Heart right ventricle (tissue), 16 donors: ENCODE measurements at regions of chr6 and their contacts with region 1.

Region 1: DNA sequence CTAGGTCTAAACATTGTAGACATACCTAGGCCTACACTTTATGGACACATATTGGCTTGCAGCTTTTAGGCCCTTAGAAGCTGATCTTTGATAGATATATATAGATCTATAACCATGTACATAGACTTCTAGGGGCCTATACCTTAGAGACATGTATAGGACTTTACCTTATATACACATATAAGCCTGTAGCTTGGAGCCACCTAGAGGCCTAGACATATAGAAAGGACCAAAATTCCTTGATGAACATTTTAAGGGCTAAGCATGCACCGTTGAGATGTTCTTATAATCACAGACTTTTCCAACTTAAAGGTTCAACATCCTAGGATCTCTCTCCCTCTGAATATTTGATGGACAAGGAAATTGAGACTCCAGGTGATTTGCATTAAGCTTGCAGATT is 371.7 kb upstream of the SASH1 start:
- DNase-seq: no peak
- ATAC-seq: no peak
- H3K4me3 ChIP-seq: no peak overlapping the region
- H3K27ac ChIP-seq: no peak overlapping the region
- H3K4me1 ChIP-seq: no peaks in the 10 kb centered on the region
- H3K27me3 ChIP-seq: no peaks in the 10 kb centered on the region
- CTCF ChIP-seq: no peak

Region 2: GRCh38 chr6:147559006-147559405 is 412.0 kb before region 1 on chr6:
- intact Hi-C with region 1: loop called in 1 of 10 experiments (anchors 5 kb)
- DNase-seq: no peak
- ATAC-seq: no peak
- H3K4me3 ChIP-seq: no peak overlapping the region
- H3K27ac ChIP-seq: no peak overlapping the region
- H3K4me1 ChIP-seq: peaks cover 0 to 7% (median 0%) of the 10 kb centered on the region in 9 donors
- H3K27me3 ChIP-seq: no peaks in the 10 kb centered on the region
- CTCF ChIP-seq: no peak

Region 3: GRCh38 chr6:147642458-147642857 is 328.5 kb before region 1 on chr6:
- intact Hi-C with region 1: loop called in 1 of 10 experiments (anchors 10 kb)
- DNase-seq: no peak
- ATAC-seq: no peak
- H3K4me3 ChIP-seq: no peak overlapping the region
- H3K27ac ChIP-seq: no peak overlapping the region
- H3K4me1 ChIP-seq: peaks cover 0 to 7% (median 0%) of the 10 kb centered on the region in 9 donors
- H3K27me3 ChIP-seq: no peaks in the 10 kb centered on the region
- CTCF ChIP-seq: no peak